Activated CD4-positive, alpha-beta T cell treated with anti-CD3 and anti-CD28 coated beads for 36 hours (primary cell): ENCODE measurements at regions of chr12 and their contacts with region 1.

Region 1: DNA sequence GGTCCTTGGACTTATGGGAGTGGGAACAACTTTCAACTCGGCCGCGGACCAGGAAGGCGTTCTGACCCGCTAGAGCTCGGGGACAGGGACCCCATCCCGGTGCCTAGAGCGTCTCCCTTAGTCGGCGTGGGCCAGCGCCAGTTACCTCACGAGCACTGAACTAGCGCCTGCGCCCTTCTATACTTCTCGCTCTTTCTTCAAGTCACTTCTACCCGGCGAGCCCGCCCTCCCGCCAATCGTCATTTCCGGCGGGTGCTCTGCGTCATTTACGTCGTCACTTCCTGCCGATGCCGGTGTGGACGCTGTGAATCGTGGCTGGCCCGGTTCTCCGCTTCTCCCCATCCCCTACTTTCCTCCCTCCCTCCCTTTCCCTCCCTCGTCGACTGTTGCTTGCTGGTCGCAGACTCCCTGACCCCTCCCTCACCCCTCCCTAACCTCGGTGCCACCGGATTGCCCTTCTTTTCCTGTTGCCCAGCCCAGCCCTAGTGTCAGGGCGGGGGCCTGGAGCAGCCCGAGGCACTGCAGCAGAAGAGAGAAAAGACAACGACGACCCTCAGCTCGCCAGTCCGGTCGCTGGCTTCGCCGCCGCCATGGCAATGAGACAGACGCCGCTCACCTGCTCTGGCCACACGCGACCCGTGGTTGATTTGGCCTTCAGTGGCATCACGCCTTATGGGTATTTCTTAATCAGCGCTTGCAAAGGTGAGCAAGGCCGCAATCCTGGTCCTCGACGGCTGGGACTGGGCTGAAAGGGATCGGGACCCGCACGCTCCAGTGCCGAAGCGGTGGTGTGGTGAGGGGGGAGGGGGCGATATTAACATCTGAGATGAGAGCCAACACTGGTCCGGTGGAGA is at the start of gene STRAP:
- DNase-seq: peak; percentile 97
- ATAC-seq: peak; percentile 98
- H3K4me3 Mint-ChIP-seq: peak within 1 kb of the TSS; percentile 95
- H3K27ac Mint-ChIP-seq: peak within 1 kb of the TSS; percentile 98
- H3K4me1 Mint-ChIP-seq: peaks cover 42% of the 10 kb centered on the region
- H3K27me3 Mint-ChIP-seq: no peaks in the 10 kb centered on the region
- total RNA-seq, gene STRAP: 133 to 139 TPM

Region 2: DNA sequence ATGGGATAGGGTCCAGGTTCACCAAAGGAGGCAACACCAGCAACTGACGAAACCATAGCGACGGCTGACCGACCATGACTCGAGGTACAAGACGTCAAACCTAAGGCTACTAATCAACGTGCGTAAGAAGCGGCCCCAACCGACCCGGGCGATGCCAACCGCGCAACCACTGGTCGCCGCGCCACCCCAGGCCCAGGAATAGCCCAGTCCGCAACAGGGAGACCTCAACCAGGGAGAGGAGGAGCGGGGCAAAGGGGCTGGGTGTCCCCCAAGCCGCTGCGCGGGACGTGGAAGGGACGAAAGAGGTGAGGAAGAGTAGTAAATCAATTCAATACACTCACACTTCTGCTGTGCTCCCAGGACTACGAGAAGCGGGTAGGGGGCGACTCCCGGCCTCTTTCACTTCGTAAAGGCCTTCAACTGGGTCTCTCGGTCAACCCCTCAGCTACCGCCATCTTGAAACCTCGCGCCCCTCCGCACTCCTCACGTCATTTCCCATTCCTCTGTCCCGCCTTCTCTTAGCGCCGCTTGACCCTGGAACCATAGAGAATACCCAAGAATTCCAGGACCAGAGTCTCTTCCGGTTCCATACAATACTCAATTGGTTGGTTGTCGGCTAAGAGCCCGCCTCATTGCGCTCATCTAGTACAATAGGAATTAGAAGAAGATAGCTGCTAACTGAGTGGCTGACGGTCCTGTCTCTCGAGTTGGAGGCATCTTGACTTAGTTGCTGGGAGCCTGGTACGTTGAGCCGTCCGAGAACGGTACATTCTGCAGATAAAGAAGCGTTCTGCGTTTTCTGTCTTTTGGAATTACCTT is 1079.1 kb before region 1 on chr12 and contains the starts of genes C12orf60 and WBP11:
- CTCF ChIA-PET with region 1: no interaction called
- POLR2A ChIA-PET with region 1: no interaction called
- intact Hi-C with region 1: loop called (anchors 1 to 10 kb)
- DNase-seq: peak; percentile 92
- ATAC-seq: peak; percentile 99
- H3K4me3 Mint-ChIP-seq: no peak within 1 kb of the TSS
- H3K27ac Mint-ChIP-seq: no peak within 1 kb of the TSS
- H3K4me1 Mint-ChIP-seq: peaks cover 33% of the 10 kb centered on the region
- H3K27me3 Mint-ChIP-seq: no peaks in the 10 kb centered on the region
- total RNA-seq, gene C12orf60: 2.9 to 3.0 TPM
- total RNA-seq, gene WBP11: 143 to 193 TPM

Region 3: GRCh38 chr12:14841761-14842160 is 1040.6 kb before region 1 on chr12:
- CTCF ChIA-PET with region 1: no interaction called
- POLR2A ChIA-PET with region 1: no interaction called
- intact Hi-C with region 1: no loop called
- DNase-seq: no peak
- ATAC-seq: no peak
- H3K4me3 Mint-ChIP-seq: no peak overlapping the region
- H3K27ac Mint-ChIP-seq: no peak overlapping the region
- H3K4me1 Mint-ChIP-seq: peaks cover 11% of the 10 kb centered on the region
- H3K27me3 Mint-ChIP-seq: peaks cover 5% of the 10 kb centered on the region

Region 4: DNA sequence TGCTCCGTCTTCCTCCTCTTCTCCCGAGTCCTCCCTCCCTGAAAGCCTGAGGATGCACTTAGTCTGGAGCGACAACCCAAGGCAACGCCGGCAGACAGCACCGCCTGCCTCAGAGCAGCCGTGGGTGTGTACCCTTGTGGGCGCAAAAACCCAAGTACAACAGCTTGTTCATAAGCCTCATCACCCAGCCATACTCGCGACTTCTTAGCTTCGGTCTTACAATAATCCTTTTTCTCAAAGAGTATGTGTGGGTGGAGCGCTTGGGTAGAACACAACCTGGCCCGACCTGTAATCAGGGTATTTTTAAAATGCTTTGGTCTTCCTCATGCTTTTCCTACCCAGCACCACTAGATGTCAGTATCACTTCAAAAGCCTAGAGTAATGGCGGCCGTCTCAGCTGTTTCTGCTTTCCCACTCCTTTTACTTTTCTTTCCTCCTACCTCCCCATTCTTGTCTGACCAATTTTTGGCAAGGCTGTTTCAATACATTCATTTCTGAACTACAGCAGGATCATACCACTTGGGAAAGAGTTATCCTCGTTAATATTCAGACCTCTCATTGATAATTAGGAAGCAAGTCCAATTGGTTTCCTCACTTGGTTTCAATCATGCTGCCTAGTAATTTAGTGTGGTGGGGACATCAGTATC is 292.0 kb before region 1 on chr12:
- CTCF ChIA-PET with region 1: interaction called, 3 read pairs
- POLR2A ChIA-PET with region 1: no interaction called
- intact Hi-C with region 1: loop called in 1 of 2 experiments (anchors 1 kb)
- DNase-seq: peak; percentile 62
- ATAC-seq: peak; percentile 93
- H3K4me3 Mint-ChIP-seq: peak overlapping the region; percentile 61
- H3K27ac Mint-ChIP-seq: peak overlapping the region; percentile 51
- H3K4me1 Mint-ChIP-seq: peaks cover 8% of the 10 kb centered on the region
- H3K27me3 Mint-ChIP-seq: no peaks in the 10 kb centered on the region

Region 5: GRCh38 chr12:15728118-15728598 is 154.2 kb before region 1 on chr12:
- CTCF ChIA-PET with region 1: no interaction called
- POLR2A ChIA-PET with region 1: no interaction called
- intact Hi-C with region 1: no loop called
- DNase-seq: no peak
- ATAC-seq: no peak
- H3K4me3 Mint-ChIP-seq: no peak overlapping the region
- H3K27ac Mint-ChIP-seq: no peak overlapping the region
- H3K4me1 Mint-ChIP-seq: no peaks in the 10 kb centered on the region
- H3K27me3 Mint-ChIP-seq: peaks cover 4% of the 10 kb centered on the region

Region 6: GRCh38 chr12:15789220-15790171 is 92.8 kb before region 1 on chr12 and contains the start of gene EPS8:
- CTCF ChIA-PET with region 1: no interaction called
- POLR2A ChIA-PET with region 1: no interaction called
- intact Hi-C with region 1: loop called in 1 of 2 experiments (anchors 1 kb)
- DNase-seq: peak; percentile 92
- ATAC-seq: peak; percentile 97
- H3K4me3 Mint-ChIP-seq: peak within 1 kb of the TSS; percentile 74
- H3K27ac Mint-ChIP-seq: peak within 1 kb of the TSS; percentile 39
- H3K4me1 Mint-ChIP-seq: peaks cover 14% of the 10 kb centered on the region
- H3K27me3 Mint-ChIP-seq: peaks cover 50% of the 10 kb centered on the region
- total RNA-seq, gene EPS8: 1.5 to 2.0 TPM

Region 7: GRCh38 chr12:15863984-15864383 is 18.4 kb before region 1 on chr12:
- CTCF ChIA-PET with region 1: no interaction called
- POLR2A ChIA-PET with region 1: no interaction called
- intact Hi-C with region 1: no loop called
- DNase-seq: no peak
- ATAC-seq: no peak
- H3K4me3 Mint-ChIP-seq: peak overlapping the region; percentile 12
- H3K27ac Mint-ChIP-seq: peak overlapping the region; percentile 11
- H3K4me1 Mint-ChIP-seq: peaks cover 6% of the 10 kb centered on the region
- H3K27me3 Mint-ChIP-seq: peaks cover 17% of the 10 kb centered on the region

Region 8: DNA sequence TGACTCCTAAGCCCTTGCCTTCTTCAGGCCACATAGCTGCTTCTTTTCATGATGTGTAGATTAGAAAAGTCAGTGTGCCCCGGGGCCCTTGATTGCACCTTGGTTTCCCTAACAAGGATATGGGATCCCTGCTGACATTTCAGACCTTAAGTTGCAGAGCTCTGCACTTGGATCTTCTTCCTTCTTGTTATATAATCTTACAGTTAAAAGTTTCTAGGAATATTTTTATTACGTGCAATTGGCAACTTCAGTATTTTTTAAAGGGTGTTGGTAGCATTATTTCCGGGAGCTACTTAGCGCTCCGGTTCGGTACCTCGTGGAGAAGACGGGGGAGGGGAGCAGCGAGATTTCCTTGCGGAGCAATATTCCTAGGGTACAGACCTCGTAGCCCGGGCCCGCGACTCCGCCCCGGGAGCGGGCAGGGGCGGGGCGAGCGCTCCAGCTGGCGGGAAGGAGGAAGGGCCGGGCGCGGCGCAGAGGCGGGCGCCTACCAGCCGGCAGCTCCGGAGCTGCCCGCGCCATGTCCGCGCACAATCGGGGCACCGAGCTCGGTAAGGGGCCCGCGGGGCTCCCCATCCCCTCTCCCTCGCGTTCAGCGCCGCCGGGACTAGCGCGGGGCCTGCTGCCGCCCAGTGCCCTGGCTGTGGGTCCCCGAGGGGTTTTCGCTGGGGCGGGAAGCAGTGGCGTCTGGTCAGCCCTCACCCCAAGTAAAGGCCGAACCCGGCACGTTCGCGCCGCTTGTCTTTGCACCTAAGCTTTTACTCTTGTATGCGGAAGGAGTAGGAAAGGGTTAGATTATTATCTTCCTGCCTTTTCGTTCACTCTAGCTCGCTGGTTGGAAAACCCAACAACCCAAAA is 28.7 kb after region 1 on chr12 and contains the start of gene DERA:
- CTCF ChIA-PET with region 1: no interaction called
- POLR2A ChIA-PET with region 1: interaction called, 3 read pairs
- intact Hi-C with region 1: loop called (anchors 1 kb)
- DNase-seq: peak; percentile 74
- ATAC-seq: peak; percentile 95
- H3K4me3 Mint-ChIP-seq: peak within 1 kb of the TSS; percentile 80
- H3K27ac Mint-ChIP-seq: peak within 1 kb of the TSS; percentile 83
- H3K4me1 Mint-ChIP-seq: peaks cover 7% of the 10 kb centered on the region
- H3K27me3 Mint-ChIP-seq: no peaks in the 10 kb centered on the region
- total RNA-seq, gene DERA: 30.9 to 35.7 TPM

Region 9: GRCh38 chr12:15966426-15966825 is 84.1 kb after region 1 on chr12:
- CTCF ChIA-PET with region 1: no interaction called
- POLR2A ChIA-PET with region 1: no interaction called
- intact Hi-C with region 1: no loop called
- DNase-seq: no peak
- ATAC-seq: no peak
- H3K4me3 Mint-ChIP-seq: no peak overlapping the region
- H3K27ac Mint-ChIP-seq: no peak overlapping the region
- H3K4me1 Mint-ChIP-seq: no peaks in the 10 kb centered on the region
- H3K27me3 Mint-ChIP-seq: no peaks in the 10 kb centered on the region